ENCODE measurements at regions of chr5 and their contacts with region 1.

Region 1: DNA sequence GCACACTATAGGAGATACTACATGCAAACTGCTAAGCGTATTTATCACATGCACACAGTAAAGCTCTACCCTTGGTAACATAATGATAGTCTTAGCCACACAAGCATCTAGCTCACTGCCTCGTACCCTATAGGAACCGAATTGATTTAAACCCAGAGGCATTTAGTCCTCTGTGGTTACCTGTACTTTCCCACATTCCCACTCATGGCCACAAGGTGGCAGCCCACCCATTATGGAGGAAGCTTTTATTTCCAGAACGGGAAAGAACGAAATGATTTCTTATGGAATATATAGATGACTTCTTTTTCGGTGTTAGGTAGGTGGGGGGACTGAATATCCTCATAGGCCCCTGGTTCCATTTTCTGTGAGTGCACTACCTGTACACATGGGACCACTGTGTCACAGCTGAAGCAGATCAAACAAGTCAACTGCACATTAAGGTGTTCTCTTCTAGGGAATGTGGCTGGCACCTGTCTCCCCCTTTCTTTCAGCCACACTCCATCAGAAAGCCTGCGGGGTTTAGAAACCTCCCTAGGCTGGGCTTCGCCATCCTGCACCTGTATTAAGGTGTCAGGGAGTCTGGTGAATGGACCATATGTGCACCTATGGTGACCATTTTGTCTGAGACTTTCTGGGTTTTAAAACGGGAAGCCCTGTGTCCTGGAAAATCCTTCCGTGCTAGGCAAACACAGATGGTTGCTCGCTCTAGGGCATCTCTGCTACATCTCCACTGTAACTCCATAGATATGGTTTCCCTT is 313.2 kb downstream of the SLIT3 start:
- DNase-seq: peak; percentile 33 to 83
- ATAC-seq: peak; percentile 64

Region 2: GRCh38 chr5:169029661-169030274 is 42.0 kb after region 1 on chr5:
- intact Hi-C with region 1: no loop called
- DNase-seq: no peak
- ATAC-seq: no peak

Region 3: GRCh38 chr5:169161022-169161680 is 173.4 kb after region 1 on chr5:
- intact Hi-C with region 1: no loop called
- DNase-seq: peak in 1 of 2 donors; percentile 9
- ATAC-seq: no peak

Region 4: GRCh38 chr5:169302491-169303118 is 314.9 kb after region 1 on chr5:
- intact Hi-C with region 1: loop called in 1 of 2 experiments (anchors 2 kb)
- DNase-seq: peak; percentile 55 to 63
- ATAC-seq: peak; percentile 68

Region 5: DNA sequence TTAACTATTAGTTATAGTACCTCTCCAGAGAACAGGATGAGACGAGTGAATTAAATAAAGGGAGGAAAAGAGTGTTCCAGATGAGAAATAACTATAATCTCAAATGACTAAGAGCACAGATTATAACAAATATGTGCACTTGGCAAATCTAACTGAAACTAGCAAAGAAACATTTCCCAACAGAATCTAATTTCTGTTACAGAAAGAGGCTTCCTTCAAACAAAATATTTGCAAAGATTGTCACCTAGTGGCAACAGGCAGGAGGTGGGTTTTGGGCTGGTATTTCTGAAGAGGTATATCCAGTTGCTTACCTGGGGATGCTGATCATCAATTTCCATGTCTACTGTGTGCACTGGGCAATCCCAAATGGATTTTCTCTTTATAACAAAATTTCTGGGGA is 590.2 kb after region 1 on chr5:
- intact Hi-C with region 1: loop called in 1 of 2 experiments (anchors 10 kb)
- DNase-seq: no peak
- ATAC-seq: no peak